ENCODE measurements at regions of chr14 and their contacts with region 1.

Region 1: GRCh38 chr14:34051966-34052657 is 101.2 kb upstream of the EGLN3 start:
- DNase-seq: peak; percentile 76
- ATAC-seq: peak; percentile 78
- H3K4me3 ChIP-seq: no peak overlapping the region
- H3K27ac ChIP-seq: no peak overlapping the region
- H3K4me1 ChIP-seq: peaks cover 28% of the 10 kb centered on the region
- H3K27me3 ChIP-seq: no peaks in the 10 kb centered on the region
- CTCF ChIP-seq: no peak
- EP300 ChIP-seq: peak in 1 of 2 experiments; percentile 49; a peak in 1 of 4 replicates
- POLR2A ChIP-seq: no peak
- RAD21 ChIP-seq: no peak

Region 2: DNA sequence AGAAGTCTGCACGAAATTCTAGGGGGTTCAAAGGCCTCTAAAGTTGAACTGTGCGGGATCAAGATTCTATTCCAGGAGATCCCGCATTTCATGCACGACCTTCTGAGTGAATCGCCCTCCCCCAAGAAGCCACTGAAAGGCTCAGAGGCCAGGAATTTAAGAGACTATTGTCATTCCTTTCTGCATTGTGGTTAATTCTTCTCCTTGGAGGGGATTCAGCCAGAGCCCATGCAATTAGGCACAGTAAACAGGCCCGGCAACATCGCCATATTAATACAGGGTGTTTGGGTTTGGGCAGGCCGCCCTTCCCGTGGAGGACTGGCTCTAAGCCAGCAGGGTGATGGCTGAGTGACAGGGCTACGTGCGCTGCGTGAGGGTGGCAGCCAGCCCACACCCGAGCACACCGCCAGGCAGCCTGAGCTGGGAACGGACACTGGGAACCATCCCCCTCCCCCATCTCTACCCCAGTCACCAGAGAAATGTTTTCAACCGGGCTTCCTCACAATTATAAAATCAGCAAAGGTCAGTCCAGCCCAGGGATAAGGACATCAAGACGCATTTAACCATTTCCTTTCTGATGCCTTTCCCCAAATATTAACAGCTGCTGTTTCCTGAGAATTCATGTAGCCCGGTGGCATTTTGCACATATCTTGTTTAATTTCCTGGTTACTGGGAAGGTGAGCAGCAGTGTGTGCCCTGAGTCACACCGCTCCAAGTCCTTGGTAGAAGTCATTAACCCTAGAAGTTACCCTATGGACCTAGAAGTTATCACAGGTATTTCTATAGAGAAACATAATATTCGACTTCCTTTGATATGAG is 113.8 kb before region 1 on chr14:
- CTCF ChIA-PET with region 1: interaction called, 3 read pairs
- POLR2A ChIA-PET with region 1: interaction called, 7 read pairs
- RAD21 ChIA-PET with region 1: interaction called, 11 read pairs
- SMC1A ChIA-PET with region 1: interaction called, 9 read pairs
- in situ Hi-C with region 1: no loop called
- intact Hi-C with region 1: no loop called
- DNase-seq: peak; percentile 36
- ATAC-seq: no peak
- H3K4me3 ChIP-seq: no peak overlapping the region; the same call in 1 of the 2 replicates
- H3K27ac ChIP-seq: no peak overlapping the region
- H3K4me1 ChIP-seq: no peaks in the 10 kb centered on the region
- H3K27me3 ChIP-seq: no peaks in the 10 kb centered on the region
- CTCF ChIP-seq: no peak
- EP300 ChIP-seq: no peak
- POLR2A ChIP-seq: no peak
- RAD21 ChIP-seq: no peak

Region 3: DNA sequence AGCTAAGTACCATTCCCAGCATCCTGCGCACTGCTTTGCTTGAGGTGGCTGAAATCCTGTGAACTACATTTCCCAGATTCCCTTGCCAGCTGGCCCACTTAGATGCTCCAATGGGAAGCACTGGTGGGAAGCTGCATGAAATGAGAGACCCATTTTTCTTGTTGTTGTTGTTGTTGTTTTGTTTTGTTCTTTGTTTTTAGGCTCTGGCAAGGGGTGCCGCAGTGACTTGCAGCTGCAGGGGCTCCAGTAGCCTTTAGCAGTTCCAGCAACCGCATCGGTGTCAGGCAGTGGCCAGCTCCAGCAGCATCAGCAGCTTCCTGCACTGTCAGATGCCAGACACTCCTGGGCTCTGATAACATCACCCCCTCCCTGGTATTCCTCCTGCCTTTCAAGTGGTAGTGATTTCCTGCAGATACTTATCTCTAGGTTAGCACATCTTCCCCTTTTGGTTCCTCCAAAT is 92.4 kb before region 1 on chr14:
- CTCF ChIA-PET with region 1: interaction called, 4 read pairs
- POLR2A ChIA-PET with region 1: interaction called, 5 read pairs
- RAD21 ChIA-PET with region 1: interaction called, 4 read pairs
- SMC1A ChIA-PET with region 1: interaction called, 11 read pairs
- in situ Hi-C with region 1: no loop called
- intact Hi-C with region 1: no loop called
- DNase-seq: no peak
- ATAC-seq: no peak
- H3K4me3 ChIP-seq: no peak overlapping the region
- H3K27ac ChIP-seq: no peak overlapping the region
- H3K4me1 ChIP-seq: peaks cover 15% of the 10 kb centered on the region
- H3K27me3 ChIP-seq: no peaks in the 10 kb centered on the region
- CTCF ChIP-seq: no peak
- EP300 ChIP-seq: no peak
- POLR2A ChIP-seq: no peak
- RAD21 ChIP-seq: no peak

Region 4: GRCh38 chr14:34075042-34075744 is 23.1 kb after region 1 on chr14:
- CTCF ChIA-PET with region 1: interaction called, 3 read pairs
- POLR2A ChIA-PET with region 1: interaction called, 6 read pairs
- RAD21 ChIA-PET with region 1: interaction called, 5 read pairs
- SMC1A ChIA-PET with region 1: interaction called, 11 read pairs
- in situ Hi-C with region 1: no loop called
- intact Hi-C with region 1: loop called (anchors 1 kb)
- DNase-seq: no peak
- ATAC-seq: peak; percentile 86
- H3K4me3 ChIP-seq: no peak overlapping the region
- H3K27ac ChIP-seq: no peak overlapping the region
- H3K4me1 ChIP-seq: peaks cover 17% of the 10 kb centered on the region
- H3K27me3 ChIP-seq: no peaks in the 10 kb centered on the region
- CTCF ChIP-seq: no peak
- EP300 ChIP-seq: no peak
- POLR2A ChIP-seq: no peak
- RAD21 ChIP-seq: no peak

Region 5: DNA sequence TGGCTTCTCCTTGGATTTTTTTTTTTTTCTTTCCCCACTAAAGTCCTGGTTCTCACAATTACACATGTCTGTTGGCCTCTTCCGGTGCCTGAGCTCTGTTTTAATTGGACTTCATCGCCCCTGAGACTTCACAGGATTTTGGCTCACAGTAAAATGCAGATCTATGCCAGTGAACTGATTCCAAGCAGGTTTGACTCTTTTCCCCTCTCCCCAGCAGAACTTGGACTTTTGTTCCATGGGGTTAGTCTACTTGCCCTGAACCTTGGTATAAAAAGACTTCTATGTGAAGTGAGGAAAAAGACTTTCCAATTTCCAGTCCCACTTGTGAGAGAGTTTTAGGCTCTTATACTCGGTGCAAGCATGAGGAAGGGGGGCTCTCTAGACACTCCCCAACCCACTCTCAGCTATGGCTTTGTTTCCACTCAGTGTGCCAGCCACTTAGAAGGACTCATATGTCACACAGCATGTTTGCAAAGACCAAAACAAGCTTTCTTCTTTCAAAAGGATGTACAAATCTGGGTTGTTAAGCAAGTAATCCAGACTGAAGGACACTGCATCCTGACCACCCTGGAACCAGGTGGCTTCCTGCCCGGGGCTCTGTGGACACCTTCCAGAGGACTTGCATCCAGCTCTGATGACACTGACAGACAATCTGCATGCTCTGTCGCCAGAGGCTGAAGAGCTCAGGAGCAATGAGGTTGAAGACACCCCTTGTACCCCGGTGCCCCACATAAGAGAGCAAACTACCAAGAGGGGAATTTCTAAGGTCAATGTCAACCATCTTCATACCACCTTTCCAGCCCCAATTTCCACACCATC is 120.6 kb after region 1 on chr14:
- CTCF ChIA-PET with region 1: no interaction called
- POLR2A ChIA-PET with region 1: no interaction called
- RAD21 ChIA-PET with region 1: no interaction called
- SMC1A ChIA-PET with region 1: no interaction called
- in situ Hi-C with region 1: no loop called
- intact Hi-C with region 1: no loop called
- DNase-seq: no peak
- ATAC-seq: no peak
- H3K4me3 ChIP-seq: no peak overlapping the region
- H3K27ac ChIP-seq: no peak overlapping the region
- H3K4me1 ChIP-seq: peaks cover 12% of the 10 kb centered on the region
- H3K27me3 ChIP-seq: no peaks in the 10 kb centered on the region
- CTCF ChIP-seq: no peak
- EP300 ChIP-seq: no peak
- POLR2A ChIP-seq: no peak
- RAD21 ChIP-seq: no peak

Measured in GM12878 (cell line).